CD8-positive, alpha-beta T cell (primary cell): ENCODE measurements at regions of chr5 and their contacts with region 1.

Region 1: GRCh38 chr5:96662725-96663513 is 743 bp downstream of the CAST start:
- DNase-seq: peak; percentile 71 to 89 (median 83)
- ATAC-seq: peak; percentile 68
- H3K4me3 ChIP-seq: peak overlapping the region; percentile 54 to 86
- H3K4me3 Mint-ChIP-seq: peak overlapping the region; percentile 94
- H3K27ac ChIP-seq: peak overlapping the region; percentile 72 to 81
- H3K27ac Mint-ChIP-seq: peak overlapping the region; percentile 98
- H3K4me1 ChIP-seq: peaks cover 23% of the 10 kb centered on the region
- H3K4me1 Mint-ChIP-seq: peaks cover 51% of the 10 kb centered on the region
- H3K27me3 ChIP-seq: no peaks in the 10 kb centered on the region
- H3K27me3 Mint-ChIP-seq: no peaks in the 10 kb centered on the region
- CTCF ChIP-seq: no peak

Region 2: DNA sequence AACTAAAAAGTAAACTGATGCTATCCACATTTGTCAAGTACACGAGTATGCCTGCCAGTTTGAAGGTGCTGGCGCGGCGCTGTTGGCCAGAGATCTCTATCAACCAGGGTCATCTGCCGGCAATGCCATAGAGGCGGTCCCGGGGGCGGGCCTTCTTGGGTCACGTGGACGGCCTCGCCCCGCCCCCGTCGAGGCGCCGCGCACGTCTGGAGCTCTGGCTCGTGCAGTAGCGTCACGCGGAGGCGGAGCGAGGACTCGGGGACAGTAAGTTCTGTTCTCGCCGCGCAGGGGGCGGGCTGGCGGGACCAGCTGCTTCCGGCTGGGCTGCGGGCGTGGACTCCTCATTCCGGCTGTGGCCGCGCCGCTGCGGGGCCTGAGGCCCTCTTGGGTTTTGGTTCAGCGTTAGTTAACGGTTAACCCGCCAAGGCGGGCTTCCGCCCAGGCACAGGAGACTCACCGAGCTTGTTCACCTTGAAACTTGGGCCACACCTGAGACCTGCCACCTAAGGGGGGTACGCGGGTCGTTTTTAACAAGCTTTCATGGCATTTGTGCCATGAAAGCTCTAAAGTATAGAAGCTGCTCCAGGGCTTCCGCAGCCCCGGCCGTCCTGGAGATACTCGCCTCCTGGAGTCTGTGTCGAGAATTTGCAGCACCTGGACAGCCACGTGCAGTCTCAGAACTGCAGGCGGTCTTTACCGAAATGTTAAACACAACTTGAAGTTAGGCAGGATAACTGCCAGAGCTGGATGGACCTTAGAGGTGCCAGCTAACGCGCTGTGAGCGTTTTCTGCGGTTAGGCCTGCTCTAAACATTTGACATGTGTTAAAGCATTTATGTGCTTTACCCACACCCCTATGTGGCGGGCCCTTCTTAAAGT is 1016.1 kb before region 1 on chr5 and contains the start of gene RFESD:
- CTCF ChIA-PET with region 1: no interaction called
- POLR2A ChIA-PET with region 1: no interaction called
- intact Hi-C with region 1: loop called in 1 of 2 experiments (anchors 5 kb)
- DNase-seq: peak; percentile 86 to 96 (median 93)
- ATAC-seq: peak; percentile 93
- H3K4me3 ChIP-seq: peak within 1 kb of the TSS; percentile 67 to 77
- H3K4me3 Mint-ChIP-seq: peak within 1 kb of the TSS; percentile 91
- H3K27ac ChIP-seq: peak within 1 kb of the TSS; percentile 76 to 85
- H3K27ac Mint-ChIP-seq: peak within 1 kb of the TSS; percentile 94
- H3K4me1 ChIP-seq: peaks cover 20% of the 10 kb centered on the region
- H3K4me1 Mint-ChIP-seq: peaks cover 40% of the 10 kb centered on the region
- H3K27me3 ChIP-seq: no peaks in the 10 kb centered on the region
- H3K27me3 Mint-ChIP-seq: no peaks in the 10 kb centered on the region
- CTCF ChIP-seq: peak; percentile 22
- total RNA-seq, gene RFESD: 1.00 to 1.7 TPM

Region 3: GRCh38 chr5:95808686-95809413 is 854.1 kb before region 1 on chr5:
- CTCF ChIA-PET with region 1: no interaction called
- POLR2A ChIA-PET with region 1: no interaction called
- intact Hi-C with region 1: loop called in 1 of 2 experiments (anchors 10 kb)
- DNase-seq: peak; percentile 54 to 95 (median 79)
- ATAC-seq: peak; percentile 99
- H3K4me3 ChIP-seq: peak overlapping the region in 1 of 2 experiments; percentile 9
- H3K4me3 Mint-ChIP-seq: peak overlapping the region; percentile 70
- H3K27ac ChIP-seq: peak overlapping the region; percentile 5 to 61
- H3K27ac Mint-ChIP-seq: peak overlapping the region; percentile 80
- H3K4me1 ChIP-seq: peaks cover 60% of the 10 kb centered on the region
- H3K4me1 Mint-ChIP-seq: peaks cover 58% of the 10 kb centered on the region
- H3K27me3 ChIP-seq: no peaks in the 10 kb centered on the region
- H3K27me3 Mint-ChIP-seq: no peaks in the 10 kb centered on the region
- CTCF ChIP-seq: no peak

Region 4: DNA sequence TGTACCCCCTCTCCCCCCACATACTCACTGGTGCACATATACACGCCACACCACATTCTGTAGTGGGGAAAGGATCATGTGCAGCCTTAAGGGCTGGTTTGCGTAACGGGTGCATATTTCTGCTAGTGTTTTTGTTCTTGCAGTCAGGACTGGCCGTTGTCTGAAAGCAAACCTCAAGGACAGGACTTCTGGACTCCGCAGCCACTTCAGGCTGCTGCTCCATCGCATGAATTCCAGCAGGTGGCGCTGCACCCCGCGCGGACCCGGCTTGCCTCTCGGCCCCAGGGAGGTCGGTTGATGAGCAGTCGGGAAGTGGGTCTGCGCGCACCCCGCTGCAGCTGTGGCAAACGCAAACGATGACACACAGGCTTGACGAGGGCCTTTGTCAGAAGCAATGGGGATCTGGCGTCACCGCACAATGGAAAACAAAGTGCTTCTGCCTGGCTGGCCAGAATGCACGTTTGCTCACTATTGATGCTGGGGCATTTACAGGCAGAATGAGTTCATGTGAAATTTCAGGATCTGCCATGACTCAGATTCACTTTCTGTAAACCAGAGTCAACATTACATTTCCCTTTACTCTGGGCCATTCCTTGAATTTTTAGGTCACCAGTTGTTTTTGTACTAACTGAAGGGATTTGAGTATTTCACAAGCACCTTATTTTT is 804.1 kb before region 1 on chr5:
- CTCF ChIA-PET with region 1: no interaction called
- POLR2A ChIA-PET with region 1: no interaction called
- intact Hi-C with region 1: loop called in 1 of 2 experiments (anchors 5 kb)
- DNase-seq: peak; percentile 76 to 95 (median 92)
- ATAC-seq: peak; percentile 98
- H3K4me3 ChIP-seq: no peak overlapping the region
- H3K4me3 Mint-ChIP-seq: peak overlapping the region; percentile 47
- H3K27ac ChIP-seq: no peak overlapping the region
- H3K27ac Mint-ChIP-seq: peak overlapping the region; percentile 34
- H3K4me1 ChIP-seq: peaks cover 9% of the 10 kb centered on the region
- H3K4me1 Mint-ChIP-seq: peaks cover 25% of the 10 kb centered on the region
- H3K27me3 ChIP-seq: no peaks in the 10 kb centered on the region
- H3K27me3 Mint-ChIP-seq: peaks cover 10% of the 10 kb centered on the region
- CTCF ChIP-seq: peak; percentile 93

Region 5: GRCh38 chr5:96702503-96703383 is 39.8 kb after region 1 on chr5:
- CTCF ChIA-PET with region 1: no interaction called
- POLR2A ChIA-PET with region 1: interaction called, 11 read pairs
- intact Hi-C with region 1: loop called (anchors 1 to 2 kb)
- DNase-seq: peak; percentile 49 to 91 (median 72)
- ATAC-seq: peak; percentile 82
- H3K4me3 ChIP-seq: peak overlapping the region; percentile 72 to 76
- H3K4me3 Mint-ChIP-seq: peak overlapping the region; percentile 82
- H3K27ac ChIP-seq: peak overlapping the region; percentile 73 to 82
- H3K27ac Mint-ChIP-seq: peak overlapping the region; percentile 94
- H3K4me1 ChIP-seq: peaks cover 7% of the 10 kb centered on the region
- H3K4me1 Mint-ChIP-seq: peaks cover 30% of the 10 kb centered on the region
- H3K27me3 ChIP-seq: no peaks in the 10 kb centered on the region
- H3K27me3 Mint-ChIP-seq: no peaks in the 10 kb centered on the region
- CTCF ChIP-seq: no peak